ENCODE measurements at regions of chr2 and their contacts with region 1.

Region 1: DNA sequence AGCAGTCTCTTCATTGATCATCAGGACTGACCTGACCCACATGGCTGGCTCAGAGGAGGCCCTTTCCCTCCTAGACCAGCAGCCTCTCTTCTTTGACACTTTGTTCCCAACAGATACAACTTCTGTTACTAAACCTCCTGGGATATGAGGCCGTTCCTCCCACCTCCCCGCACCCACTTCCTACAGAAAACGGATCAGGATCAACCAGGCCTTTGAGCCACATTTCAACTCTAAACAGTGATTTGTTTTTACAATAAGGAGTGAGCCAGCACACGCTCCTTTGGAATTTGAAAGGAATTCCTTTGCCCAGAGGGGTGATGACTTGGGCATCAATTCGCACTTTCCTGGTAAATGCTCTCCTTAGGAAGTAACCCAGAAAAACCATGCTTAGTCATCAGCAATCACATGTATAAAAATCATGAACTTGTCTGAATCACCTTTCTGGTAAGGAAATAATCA is 180.4 kb downstream of the FAM124B start:
- DNase-seq: no peak
- ATAC-seq: no peak
- H3K4me3 ChIP-seq: no peak overlapping the region
- H3K27ac ChIP-seq: no peak overlapping the region
- H3K4me1 ChIP-seq: peaks cover 0 to 2% of the 10 kb centered on the region in 2 donors
- H3K27me3 ChIP-seq: no peaks in the 10 kb centered on the region

Region 2: DNA sequence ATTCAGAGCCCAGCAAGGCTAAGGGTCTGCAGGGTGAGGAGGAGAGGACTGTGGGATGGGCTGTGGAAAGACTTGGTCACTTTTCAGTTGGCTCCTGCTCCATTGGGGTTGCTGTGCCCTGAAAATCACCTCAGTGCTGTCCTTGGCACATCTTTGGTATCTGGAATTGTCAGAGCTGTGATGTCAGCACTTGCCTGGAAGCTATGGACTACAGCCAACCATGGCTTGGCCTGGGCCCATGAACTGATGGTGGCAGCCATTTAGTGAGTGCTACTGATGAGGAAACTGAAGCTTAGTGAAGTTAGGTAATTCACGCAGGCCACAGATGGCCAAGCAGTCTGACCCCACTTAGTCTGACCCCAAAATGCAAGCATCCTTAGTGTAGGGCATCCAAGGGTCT is 60.6 kb before region 1 on chr2:
- intact Hi-C with region 1: loop called in 1 of 2 experiments (anchors 5 kb)
- DNase-seq: peak; percentile 72 to 80
- ATAC-seq: no peak
- H3K4me3 ChIP-seq: no peak overlapping the region
- H3K27ac ChIP-seq: no peak overlapping the region
- H3K4me1 ChIP-seq: no peaks in the 10 kb centered on the region
- H3K27me3 ChIP-seq: no peaks in the 10 kb centered on the region

Region 3: DNA sequence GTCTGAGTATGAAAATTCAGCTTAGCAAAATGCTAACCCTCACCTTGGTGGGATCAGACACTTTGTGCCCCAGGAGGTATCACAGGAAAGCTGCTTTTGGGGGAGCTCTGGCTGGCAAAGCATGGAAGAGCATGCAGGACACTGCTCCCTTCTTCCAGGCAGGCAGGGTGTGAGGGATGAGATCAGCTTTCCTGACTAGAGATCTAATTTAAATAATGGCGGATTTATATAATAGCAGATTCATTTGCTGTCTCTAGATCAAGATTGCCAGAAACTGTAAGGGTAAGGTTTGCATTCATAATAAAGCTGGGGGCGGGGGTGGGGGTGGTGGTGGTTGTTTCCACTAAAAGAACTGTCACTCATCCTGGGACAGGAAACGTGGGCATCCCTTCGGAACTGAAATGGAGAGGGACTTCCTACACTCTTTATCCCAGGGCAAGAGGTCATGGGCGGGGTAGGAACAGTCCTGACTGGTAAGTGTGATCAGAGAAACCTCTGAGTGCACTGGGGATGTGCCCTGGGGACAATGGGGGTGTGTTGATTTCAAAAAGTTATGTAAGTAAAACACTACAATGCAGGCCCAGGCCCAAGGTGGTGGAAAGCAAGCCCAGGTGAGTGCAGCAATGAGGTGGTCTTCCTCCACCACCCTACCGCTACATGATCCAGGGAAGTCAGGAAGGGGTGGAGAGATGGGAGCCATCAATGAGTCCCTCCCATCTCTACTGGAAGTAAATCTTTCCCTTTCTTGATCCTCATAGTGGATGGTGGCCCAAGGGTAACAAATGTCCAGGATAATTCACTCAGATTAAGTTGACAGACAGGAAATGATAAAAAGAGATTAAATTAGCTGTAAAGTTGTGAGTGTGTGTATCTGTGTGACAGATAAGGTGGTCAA is 11.0 kb before region 1 on chr2:
- intact Hi-C with region 1: no loop called
- DNase-seq: no peak
- ATAC-seq: no peak
- H3K4me3 ChIP-seq: no peak overlapping the region
- H3K27ac ChIP-seq: no peak overlapping the region
- H3K4me1 ChIP-seq: no peaks in the 10 kb centered on the region
- H3K27me3 ChIP-seq: no peaks in the 10 kb centered on the region